MCF 10A (cell line): ENCODE measurements at regions of chr1 and their contacts with region 1.

Region 1: DNA sequence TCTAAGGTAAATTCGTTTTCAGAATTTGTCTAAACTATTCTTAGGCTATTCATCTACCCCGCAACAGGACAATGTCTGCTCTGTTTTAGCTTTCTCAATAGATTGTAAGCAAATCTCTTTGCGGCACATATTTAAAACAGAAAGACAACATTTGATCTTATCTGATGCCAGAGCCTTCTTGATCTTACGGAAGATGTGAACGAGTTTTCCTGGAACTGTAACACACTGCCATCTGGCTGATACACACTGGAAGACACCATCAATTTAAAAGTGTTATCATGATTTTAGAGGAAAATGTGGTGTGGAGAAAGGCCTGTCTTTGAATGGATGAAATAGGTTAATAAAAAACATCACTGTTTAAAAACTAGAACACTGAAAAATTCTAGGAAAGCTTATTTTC is 36.1 kb downstream of the COA6 start:
- DNase-seq: no peak
- H3K4me3 Mint-ChIP-seq: no peak overlapping the region
- H3K27ac Mint-ChIP-seq: no peak overlapping the region
- H3K4me1 Mint-ChIP-seq: no peaks in the 10 kb centered on the region
- H3K27me3 Mint-ChIP-seq: no peaks in the 10 kb centered on the region
- CTCF ChIP-seq: no peak

Region 2: GRCh38 chr1:234361102-234361603 is 48.2 kb before region 1 on chr1:
- CTCF ChIA-PET with region 1: no interaction called
- POLR2A ChIA-PET with region 1: no interaction called
- intact Hi-C with region 1: no loop called
- DNase-seq: no peak
- H3K4me3 Mint-ChIP-seq: no peak overlapping the region
- H3K27ac Mint-ChIP-seq: no peak overlapping the region
- H3K4me1 Mint-ChIP-seq: peaks cover 12% of the 10 kb centered on the region
- H3K27me3 Mint-ChIP-seq: no peaks in the 10 kb centered on the region
- CTCF ChIP-seq: no peak

Region 3: DNA sequence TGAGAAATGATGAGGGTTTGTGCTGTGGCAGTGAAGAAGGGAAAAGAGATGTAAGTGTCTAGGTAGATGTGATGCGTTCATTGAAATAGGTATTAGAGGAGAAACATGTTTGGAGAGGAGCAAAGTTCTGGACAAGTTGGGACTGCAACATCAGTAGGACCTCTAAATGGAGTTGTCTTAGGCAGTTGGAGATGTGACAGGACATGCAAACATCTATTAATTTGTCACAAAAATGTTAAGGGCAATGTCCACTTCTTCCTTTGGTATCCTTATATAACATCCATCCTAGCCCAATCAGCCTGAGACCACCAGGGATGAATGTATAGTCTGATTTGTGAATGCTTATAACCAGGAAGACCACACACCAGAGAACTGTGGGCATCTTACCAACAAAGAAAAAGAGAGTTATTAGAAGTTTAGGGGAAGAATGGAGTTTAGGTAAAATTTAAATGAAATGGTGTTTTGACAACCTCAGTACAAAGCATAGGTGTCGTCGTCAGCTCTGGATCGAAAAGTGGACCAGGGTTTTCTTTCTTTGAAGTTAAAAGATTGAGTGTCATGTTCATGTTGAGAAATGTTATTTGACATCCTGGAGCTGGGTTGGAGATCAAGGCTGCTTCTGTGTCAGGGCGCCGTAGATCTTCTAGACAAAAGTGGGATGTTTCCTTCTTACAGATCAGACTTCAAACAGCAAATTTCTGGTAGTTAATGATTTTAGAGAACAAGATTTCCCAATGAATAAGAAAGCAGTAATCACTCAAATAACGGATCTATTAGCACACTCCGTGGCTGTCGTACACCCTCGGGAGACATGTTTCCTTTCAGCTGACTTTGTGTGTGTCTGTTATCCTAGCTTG is 27.4 kb before region 1 on chr1:
- CTCF ChIA-PET with region 1: no interaction called
- POLR2A ChIA-PET with region 1: no interaction called
- intact Hi-C with region 1: no loop called
- DNase-seq: no peak
- H3K4me3 Mint-ChIP-seq: no peak overlapping the region
- H3K27ac Mint-ChIP-seq: peak overlapping the region; percentile 55
- H3K4me1 Mint-ChIP-seq: peaks cover 15% of the 10 kb centered on the region
- H3K27me3 Mint-ChIP-seq: no peaks in the 10 kb centered on the region
- CTCF ChIP-seq: no peak

Region 4: GRCh38 chr1:234393190-234393589 is 16.1 kb before region 1 on chr1:
- CTCF ChIA-PET with region 1: interaction called, 14 read pairs
- POLR2A ChIA-PET with region 1: interaction called, 4 read pairs
- intact Hi-C with region 1: no loop called
- DNase-seq: no peak
- H3K4me3 Mint-ChIP-seq: no peak overlapping the region
- H3K27ac Mint-ChIP-seq: no peak overlapping the region
- H3K4me1 Mint-ChIP-seq: peaks cover 5% of the 10 kb centered on the region
- H3K27me3 Mint-ChIP-seq: no peaks in the 10 kb centered on the region
- CTCF ChIP-seq: no peak

Region 5: DNA sequence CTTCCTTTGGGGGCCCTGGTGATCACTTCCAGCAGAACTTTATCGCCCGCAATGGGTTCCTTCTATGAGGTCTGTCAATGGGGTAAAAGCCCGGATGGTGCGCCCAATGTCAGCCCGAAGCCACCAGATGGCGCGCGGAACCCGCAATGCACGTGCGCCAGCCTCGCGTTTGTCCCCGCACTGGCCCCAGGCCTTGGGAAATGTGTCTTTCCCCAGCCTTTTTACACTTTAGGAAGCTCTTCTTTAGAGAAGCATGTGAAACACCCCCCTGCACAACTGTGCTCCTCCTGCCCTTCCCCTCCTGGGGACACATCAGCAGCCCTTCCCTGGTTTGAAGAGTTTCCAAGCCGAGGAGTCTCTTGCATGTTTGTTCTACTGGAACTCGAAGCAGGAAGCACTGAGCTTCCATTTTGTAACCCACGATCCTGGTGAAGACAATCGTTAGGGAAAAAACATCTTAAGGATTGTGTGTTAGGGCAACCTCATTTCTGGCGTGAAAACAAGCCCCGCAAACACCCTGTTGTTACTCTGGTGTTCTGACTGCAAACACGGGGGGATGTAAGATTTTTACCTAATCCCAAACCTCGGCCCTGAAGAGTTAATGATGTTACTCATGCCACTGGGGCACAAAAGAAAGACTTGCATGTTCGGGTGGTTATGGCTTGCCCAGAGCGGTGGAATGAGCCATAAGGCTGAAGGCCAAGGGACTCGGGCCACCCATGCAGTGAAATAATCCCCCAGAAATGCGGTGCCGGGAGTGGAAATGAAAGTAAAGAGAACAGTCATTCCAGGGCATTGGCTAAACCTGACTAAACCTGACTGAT is 90.0 kb after region 1 on chr1:
- CTCF ChIA-PET with region 1: no interaction called
- POLR2A ChIA-PET with region 1: no interaction called
- intact Hi-C with region 1: no loop called
- DNase-seq: peak; percentile 97
- H3K4me3 Mint-ChIP-seq: peak overlapping the region; percentile 28
- H3K27ac Mint-ChIP-seq: peak overlapping the region; percentile 71
- H3K4me1 Mint-ChIP-seq: peaks cover 53% of the 10 kb centered on the region
- H3K27me3 Mint-ChIP-seq: no peaks in the 10 kb centered on the region
- CTCF ChIP-seq: peak; percentile 100